ENCODE measurements at regions of chr16 and their contacts with region 1.

Region 1: GRCh38 chr16:14529010-14529669 is 100.9 kb downstream of the PARN start:
- H3K4me3 Mint-ChIP-seq: no peak overlapping the region
- H3K27ac Mint-ChIP-seq: no peak overlapping the region
- H3K4me1 Mint-ChIP-seq: peaks cover 15% of the 10 kb centered on the region
- H3K27me3 Mint-ChIP-seq: no peaks in the 10 kb centered on the region

Region 2: GRCh38 chr16:14249291-14250032 is 279.7 kb before region 1 on chr16:
- intact Hi-C with region 1: loop called (anchors 1 kb)
- H3K4me3 Mint-ChIP-seq: no peak overlapping the region
- H3K27ac Mint-ChIP-seq: no peak overlapping the region
- H3K4me1 Mint-ChIP-seq: no peaks in the 10 kb centered on the region
- H3K27me3 Mint-ChIP-seq: no peaks in the 10 kb centered on the region

Region 3: DNA sequence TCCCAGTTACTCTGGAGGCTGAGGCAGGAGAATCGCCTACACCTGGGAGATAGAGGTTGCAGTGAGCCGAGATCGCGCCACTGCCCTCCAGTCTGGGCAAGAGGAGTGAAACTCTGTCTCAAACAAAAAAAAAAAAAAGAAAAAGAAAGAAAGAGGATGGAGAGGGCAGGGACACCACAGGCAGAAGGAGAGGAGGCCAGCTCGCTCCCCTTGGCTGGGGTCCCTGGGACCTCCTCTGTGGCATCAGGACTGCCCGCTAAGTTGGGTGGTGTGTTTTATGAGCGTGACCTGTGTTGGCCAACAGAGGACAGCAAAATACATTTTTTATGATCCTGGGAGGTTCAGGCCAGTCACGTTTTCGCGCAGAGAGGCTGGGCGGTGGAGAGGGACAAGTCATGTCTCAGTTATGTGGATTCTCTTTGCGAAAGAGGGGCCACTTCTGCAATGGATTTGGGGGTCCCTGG is 228.4 kb before region 1 on chr16:
- intact Hi-C with region 1: loop called (anchors 1 kb)
- H3K4me3 Mint-ChIP-seq: peak overlapping the region; percentile 86
- H3K27ac Mint-ChIP-seq: peak overlapping the region; percentile 88
- H3K4me1 Mint-ChIP-seq: peaks cover 52% of the 10 kb centered on the region
- H3K27me3 Mint-ChIP-seq: peaks cover 50% of the 10 kb centered on the region

Region 4: DNA sequence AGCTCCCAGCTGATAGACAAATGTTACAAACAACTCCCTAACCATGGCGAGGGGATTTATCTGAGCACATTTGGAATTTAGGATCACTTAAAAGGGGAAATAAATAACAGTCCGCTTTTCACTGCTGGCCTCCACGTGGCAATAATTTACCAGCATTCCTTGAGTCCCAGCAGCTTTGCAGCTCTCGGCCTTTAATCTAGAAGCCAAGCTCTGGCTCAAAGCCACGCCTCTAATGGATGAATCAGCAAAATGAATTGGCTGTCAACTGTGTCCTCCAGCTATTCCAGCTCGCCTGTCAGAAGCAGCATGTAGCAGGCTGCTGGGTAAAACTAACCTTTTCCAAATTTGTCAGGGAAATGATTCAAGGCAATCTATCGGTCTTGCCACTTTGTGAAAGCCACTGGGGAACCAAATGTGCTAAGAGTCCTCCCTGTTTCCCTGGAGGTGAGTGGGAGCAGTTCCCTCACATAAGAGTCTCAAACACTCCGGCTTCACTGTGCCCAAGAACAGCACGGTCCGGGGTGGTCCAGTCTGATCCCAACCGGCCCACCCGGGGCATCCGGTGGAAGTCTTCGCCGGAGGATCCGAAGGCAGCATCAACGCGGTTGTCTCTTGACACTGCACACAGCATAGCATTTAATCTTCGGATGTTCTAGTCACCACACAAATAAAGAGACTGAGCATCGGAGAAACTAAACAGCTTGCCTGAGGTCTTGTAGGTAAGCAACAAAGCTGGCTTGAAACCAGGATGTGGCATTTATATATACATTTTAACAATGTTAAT is 42.4 kb before region 1 on chr16:
- intact Hi-C with region 1: no loop called
- H3K4me3 Mint-ChIP-seq: no peak overlapping the region
- H3K27ac Mint-ChIP-seq: no peak overlapping the region
- H3K4me1 Mint-ChIP-seq: peaks cover 21% of the 10 kb centered on the region
- H3K27me3 Mint-ChIP-seq: no peaks in the 10 kb centered on the region

Measured in dendritic cell treated with granulocyte-macrophage colony-stimulating factor and Interleukin-4, amounts not matched to agents 40 ng/mL and 50 ng/mL, for 4 days (primary cell).